ENCODE measurements at regions of chr2 and their contacts with region 1.

Region 1: DNA sequence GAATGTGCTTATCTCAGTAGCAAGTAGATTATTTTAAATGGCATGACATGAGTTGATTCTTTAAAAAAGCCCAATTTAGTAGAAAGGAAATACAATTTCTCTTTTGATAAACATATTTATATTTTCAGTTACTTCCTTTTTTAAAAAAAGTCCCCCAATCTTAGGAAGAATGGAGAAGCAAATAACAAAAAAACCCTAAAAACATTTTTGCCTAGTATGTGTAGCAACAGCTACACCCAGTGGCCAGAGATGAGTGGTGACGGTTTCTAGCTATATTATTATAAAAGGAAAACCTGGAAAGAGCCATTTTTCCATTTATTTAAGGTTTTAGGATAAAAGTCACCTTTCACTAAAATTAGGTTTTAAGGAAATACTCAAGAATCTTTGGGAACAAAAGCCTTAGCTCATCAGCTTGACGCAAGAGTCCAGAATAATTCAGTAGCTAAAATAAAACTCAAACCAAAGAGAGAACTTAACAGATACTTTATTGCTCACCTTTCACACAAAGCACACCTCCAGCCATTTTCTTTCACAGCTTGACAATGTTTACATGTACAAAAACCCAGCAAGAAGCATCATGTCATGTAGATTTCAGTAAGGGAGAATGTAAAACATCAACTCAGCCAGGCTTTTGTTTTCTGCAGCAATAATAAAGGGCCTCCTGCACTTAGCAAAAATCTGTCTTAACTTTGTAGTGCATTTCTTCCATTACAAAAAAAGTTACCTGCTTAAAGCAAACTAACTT is 15.7 kb downstream of the FAM98A start:
- DNase-seq: peak; percentile 79
- H3K4me3 Mint-ChIP-seq: no peak overlapping the region
- H3K27ac Mint-ChIP-seq: no peak overlapping the region
- H3K4me1 Mint-ChIP-seq: peaks cover 12% of the 10 kb centered on the region
- H3K27me3 Mint-ChIP-seq: no peaks in the 10 kb centered on the region

Region 2: DNA sequence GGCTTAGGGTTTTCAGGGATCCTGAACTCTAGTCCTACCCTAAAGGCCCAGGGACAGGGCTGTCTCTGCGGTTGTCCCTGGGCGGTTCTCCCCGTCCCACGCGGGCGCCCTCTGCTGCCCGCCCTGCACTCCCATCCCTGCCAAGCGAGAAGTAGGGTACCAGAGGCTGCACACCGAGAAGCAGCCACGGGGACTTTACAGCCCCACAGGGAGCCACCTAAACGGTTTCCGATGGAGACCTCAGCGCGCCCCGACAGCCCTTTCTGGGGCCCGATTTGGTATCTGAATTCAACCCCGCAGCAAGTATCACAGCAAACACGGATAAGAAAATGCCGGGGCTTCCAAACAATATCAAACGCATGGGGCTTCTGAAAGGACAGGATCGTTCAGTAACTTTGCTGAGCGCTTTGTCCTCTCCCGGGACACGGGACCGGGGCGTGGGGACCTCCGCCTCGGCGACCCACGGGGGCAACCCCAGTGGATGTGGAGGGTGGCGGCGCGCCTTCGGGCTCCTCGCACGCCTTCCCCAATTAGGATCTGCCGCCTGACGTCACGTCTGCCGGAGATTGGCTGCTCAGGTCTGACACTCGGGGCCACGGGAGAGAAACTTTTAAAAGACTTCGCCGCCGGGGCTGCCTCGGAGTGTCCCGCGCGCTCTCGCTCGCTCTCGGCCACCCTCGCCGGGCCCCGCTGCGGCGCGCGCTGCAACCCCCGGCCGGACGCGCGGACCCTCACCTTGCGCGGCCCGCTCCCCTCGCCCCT is 636.9 kb before region 1 on chr2 and contains the start of gene LTBP1:
- intact Hi-C with region 1: loop called (anchors 5 kb)
- DNase-seq: peak; percentile 92
- H3K4me3 Mint-ChIP-seq: peak within 1 kb of the TSS; percentile 83
- H3K27ac Mint-ChIP-seq: no peak within 1 kb of the TSS
- H3K4me1 Mint-ChIP-seq: peaks cover 2% of the 10 kb centered on the region
- H3K27me3 Mint-ChIP-seq: peaks cover 29% of the 10 kb centered on the region
- total RNA-seq, gene LTBP1: 0.14 and 0.21 TPM in 2 replicates

Region 3: DNA sequence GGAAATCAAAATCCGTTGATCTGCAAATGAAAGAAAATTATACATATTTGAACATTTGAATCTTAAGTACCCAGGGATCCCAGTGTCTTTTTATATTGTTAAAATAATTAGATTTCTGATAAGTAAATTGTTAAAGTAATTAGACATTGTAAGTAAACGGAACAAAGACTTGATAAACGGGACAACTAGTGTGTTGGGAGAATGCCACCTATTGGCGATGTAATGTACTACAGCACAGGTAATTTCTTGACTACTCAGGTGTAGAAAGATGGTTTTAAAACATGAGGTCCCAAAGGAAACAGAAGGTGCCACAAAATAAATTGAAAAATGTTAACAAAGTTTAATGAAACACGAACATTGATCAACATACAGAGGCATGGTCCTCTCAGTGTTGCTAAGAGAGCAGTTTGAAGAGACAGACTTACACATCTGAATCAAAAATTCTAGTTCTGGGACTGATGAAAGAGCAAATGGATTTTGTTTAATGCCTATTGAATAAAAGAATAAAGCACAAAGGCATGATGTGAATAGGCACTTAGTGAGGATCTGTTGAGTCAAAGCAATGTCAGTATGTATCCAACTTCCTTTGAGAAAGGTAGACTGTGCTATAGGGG is 210.3 kb before region 1 on chr2:
- intact Hi-C with region 1: loop called (anchors 5 kb)
- DNase-seq: peak; percentile 79
- H3K4me3 Mint-ChIP-seq: no peak overlapping the region
- H3K27ac Mint-ChIP-seq: no peak overlapping the region
- H3K4me1 Mint-ChIP-seq: no peaks in the 10 kb centered on the region
- H3K27me3 Mint-ChIP-seq: no peaks in the 10 kb centered on the region

Region 4: GRCh38 chr2:33497221-33497650 is 86.1 kb before region 1 on chr2:
- intact Hi-C with region 1: loop called (anchors 1 kb)
- DNase-seq: peak; percentile 65
- H3K4me3 Mint-ChIP-seq: no peak overlapping the region
- H3K27ac Mint-ChIP-seq: no peak overlapping the region
- H3K4me1 Mint-ChIP-seq: peaks cover 35% of the 10 kb centered on the region
- H3K27me3 Mint-ChIP-seq: no peaks in the 10 kb centered on the region

Region 5: DNA sequence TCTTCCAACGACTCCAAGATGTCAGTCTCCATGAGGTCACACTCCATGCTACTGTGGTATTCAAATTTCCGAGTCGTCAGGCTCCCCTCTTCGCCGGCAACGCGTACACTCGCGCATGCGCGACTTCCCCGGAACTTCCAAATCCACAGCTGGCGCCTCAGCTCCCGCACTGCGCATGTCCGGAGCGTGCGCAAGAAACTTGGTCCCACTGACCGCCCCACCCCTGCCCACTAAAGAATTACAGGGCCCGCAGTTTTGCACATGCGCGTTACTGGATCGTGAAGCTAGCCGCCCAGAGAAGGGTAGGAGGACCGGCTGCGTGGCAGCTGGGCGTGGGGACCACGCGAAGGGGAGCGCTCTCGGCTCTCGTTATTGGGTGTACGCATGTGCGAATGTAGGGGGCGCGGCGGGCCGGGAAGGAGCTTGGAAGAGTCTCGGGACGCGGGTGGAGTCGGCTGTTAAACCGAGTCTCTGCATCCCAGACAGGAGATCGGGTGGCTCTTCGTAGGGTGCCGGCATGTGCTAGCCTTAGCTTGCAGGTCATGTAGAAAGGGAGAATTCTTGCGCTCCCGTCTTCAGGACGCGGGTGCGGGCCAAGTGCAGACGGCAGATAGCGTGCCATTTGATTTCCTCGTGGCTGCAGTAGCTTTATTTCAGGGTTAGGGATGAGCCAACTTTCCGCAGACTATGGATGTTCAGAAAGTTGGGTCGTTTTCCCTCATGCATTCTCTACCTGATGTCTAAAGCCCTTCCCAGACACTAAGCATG is 16.0 kb after region 1 on chr2 and contains the start of gene FAM98A:
- intact Hi-C with region 1: loop called (anchors 1 kb)
- DNase-seq: peak; percentile 100
- H3K4me3 Mint-ChIP-seq: peak within 1 kb of the TSS; percentile 98
- H3K27ac Mint-ChIP-seq: peak within 1 kb of the TSS; percentile 99
- H3K4me1 Mint-ChIP-seq: peaks cover 30% of the 10 kb centered on the region
- H3K27me3 Mint-ChIP-seq: peaks cover 2% of the 10 kb centered on the region
- total RNA-seq, gene FAM98A: 72.9 and 79.2 TPM in 2 replicates

Region 6: GRCh38 chr2:34447097-34447496 is 863.7 kb after region 1 on chr2:
- intact Hi-C with region 1: no loop called
- DNase-seq: no peak
- H3K4me3 Mint-ChIP-seq: no peak overlapping the region
- H3K27ac Mint-ChIP-seq: no peak overlapping the region
- H3K4me1 Mint-ChIP-seq: no peaks in the 10 kb centered on the region
- H3K27me3 Mint-ChIP-seq: no peaks in the 10 kb centered on the region